Activated naive CD4-positive, alpha-beta T cell treated with anti-CD3 and anti-CD28 coated beads, Interleukin-2, amount 10 ng/mL, durations not matched to agents 7 days and 5 days (primary cell): ENCODE measurements at regions of chr17 and their contacts with region 1.

Region 1: GRCh38 chr17:15999439-16000350 is at the starts of genes TTC19 and ZSWIM7:
- DNase-seq: peak; percentile 96
- H3K4me3 Mint-ChIP-seq: peak within 1 kb of the TSS; percentile 89
- H3K27ac Mint-ChIP-seq: peak within 1 kb of the TSS; percentile 98
- H3K4me1 Mint-ChIP-seq: peaks cover 41% of the 10 kb centered on the region
- H3K27me3 Mint-ChIP-seq: no peaks in the 10 kb centered on the region

Region 2: DNA sequence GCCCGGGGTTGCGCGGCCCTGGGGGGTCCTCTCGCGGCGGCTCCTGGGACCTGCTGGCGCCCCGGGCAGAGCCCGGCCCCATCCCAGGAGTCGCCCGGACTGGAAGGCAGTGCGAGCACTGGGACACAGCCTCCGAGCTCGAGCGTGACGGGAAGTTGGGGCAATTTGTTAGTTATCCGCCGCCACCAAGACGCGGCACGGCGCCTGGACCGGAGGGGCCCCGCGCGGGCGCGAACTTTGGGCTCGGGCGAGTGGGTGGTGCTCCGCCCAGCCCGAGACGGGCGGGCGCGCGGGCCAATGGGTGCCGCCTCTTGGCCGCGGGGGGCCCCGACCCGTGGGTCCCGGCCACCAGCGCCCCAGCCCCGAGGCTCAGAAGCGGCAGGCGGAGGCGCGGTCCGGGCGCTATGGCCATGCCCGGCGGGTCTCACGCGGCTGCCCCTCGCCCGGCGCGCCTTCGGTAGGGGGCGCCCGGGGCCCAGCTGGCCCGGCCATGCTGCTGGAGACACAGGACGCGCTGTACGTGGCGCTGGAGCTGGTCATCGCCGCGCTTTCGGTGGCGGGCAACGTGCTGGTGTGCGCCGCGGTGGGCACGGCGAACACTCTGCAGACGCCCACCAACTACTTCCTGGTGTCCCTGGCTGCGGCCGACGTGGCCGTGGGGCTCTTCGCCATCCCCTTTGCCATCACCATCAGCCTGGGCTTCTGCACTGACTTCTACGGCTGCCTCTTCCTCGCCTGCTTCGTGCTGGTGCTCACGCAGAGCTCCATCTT is 54.8 kb before region 1 on chr17 and contains the start of gene ADORA2B:
- CTCF ChIA-PET with region 1: interaction called, 19 read pairs
- DNase-seq: peak; percentile 66
- H3K4me3 Mint-ChIP-seq: peak within 1 kb of the TSS; percentile 73
- H3K27ac Mint-ChIP-seq: no peak within 1 kb of the TSS
- H3K4me1 Mint-ChIP-seq: peaks cover 11% of the 10 kb centered on the region
- H3K27me3 Mint-ChIP-seq: peaks cover 76% of the 10 kb centered on the region

Region 3: DNA sequence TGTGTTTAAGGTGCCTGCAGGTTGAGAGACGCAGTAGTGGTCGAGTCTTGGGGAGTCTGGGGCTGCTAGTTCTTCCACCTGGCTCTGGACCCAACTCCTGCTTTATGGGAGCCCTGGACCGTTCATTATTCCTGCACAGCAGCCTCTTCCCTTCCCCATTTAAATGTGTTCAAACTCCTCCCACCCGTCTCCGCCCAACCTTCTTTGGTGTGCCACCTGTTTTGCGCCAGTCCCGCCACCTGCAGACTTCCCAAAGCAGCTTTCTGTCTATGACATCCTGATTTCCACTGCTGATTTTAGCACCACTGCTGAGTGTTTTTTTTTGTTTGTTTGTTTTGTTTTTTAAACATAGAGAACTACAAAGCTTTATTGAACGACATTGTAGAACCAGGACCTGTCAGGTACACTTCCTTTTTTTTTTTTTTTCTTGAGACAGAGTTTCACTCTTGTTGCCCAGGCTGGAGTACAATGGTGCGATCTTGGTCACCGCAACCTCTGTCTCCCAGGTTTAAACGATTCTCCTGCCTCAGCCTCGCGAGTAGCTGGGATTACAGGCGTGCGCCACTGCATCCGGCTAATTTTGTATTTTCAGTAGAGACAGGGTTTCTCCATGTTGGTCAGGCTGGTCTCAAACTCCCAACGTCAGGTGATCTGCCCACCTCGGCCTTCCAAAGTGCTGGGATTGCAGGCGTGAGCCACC is 41.9 kb before region 1 on chr17:
- CTCF ChIA-PET with region 1: interaction called, 14 read pairs
- DNase-seq: no peak
- H3K4me3 Mint-ChIP-seq: no peak overlapping the region
- H3K27ac Mint-ChIP-seq: no peak overlapping the region
- H3K4me1 Mint-ChIP-seq: peaks cover 28% of the 10 kb centered on the region
- H3K27me3 Mint-ChIP-seq: peaks cover 40% of the 10 kb centered on the region